ENCODE measurements at regions of chr5 and their contacts with region 1.

Region 1: DNA sequence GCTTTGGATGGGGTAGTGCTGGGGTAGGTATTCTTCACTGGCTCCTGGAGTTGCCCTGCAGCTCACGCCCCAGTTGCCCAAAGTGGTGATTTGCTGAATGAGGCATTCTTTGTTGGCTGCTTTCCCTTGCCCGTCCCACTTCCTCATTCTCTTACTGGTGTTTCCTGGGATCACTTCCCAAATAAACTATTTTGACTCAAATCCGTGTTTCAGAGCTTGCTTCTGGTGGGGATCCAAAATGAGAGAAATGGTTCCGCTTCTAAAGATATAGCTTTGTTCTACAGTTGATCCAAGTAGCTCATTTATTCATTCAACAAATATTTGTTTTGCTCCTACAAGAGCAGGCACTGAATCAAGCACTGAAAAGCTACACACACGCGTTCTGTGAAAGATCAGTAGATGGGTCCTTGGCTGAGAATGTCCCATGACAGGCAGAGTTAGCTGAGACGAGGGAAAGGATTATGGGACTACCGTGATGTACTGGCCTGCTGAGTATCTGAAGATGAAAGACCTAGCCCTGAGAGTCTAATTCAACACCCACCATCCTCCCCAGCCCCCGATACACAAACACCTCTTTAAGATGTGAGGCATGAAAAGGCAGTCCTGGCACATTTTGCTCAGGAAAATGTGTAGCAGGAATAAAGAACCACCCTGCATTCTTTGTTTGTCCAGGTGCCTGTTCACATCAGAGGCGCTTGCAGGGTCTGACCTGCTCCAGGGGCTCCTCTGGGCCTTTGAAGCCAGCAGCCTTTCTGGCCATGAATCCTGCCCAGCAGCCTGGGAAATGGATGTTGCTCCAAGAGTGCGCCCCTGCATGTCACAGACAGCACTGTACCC is 143.1 kb upstream of the RANBP3L start:
- DNase-seq: peak in 35 of 42 donors; percentile 17 to 81 (median 49)

Region 2: DNA sequence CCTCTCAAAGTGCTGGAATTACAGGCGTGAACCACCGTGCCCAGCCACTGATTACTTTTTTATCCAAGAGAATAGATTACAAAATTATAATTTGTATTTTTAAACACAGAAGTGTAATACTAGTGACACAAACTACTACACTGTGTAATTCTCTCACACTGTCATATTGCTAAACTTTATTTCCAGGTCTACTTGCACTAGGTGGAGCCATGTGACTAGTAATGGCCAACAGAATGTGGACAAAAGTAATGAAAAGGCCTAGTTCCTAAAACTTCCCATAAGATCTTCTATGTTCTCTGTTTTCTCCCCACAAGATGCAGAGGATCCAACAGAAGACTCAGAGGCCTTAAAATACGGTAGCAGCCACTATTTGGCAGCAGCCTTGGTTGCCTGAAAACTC is 230.4 kb before region 1 on chr5:
- intact Hi-C with region 1: no loop called
- DNase-seq: no peak

Region 3: DNA sequence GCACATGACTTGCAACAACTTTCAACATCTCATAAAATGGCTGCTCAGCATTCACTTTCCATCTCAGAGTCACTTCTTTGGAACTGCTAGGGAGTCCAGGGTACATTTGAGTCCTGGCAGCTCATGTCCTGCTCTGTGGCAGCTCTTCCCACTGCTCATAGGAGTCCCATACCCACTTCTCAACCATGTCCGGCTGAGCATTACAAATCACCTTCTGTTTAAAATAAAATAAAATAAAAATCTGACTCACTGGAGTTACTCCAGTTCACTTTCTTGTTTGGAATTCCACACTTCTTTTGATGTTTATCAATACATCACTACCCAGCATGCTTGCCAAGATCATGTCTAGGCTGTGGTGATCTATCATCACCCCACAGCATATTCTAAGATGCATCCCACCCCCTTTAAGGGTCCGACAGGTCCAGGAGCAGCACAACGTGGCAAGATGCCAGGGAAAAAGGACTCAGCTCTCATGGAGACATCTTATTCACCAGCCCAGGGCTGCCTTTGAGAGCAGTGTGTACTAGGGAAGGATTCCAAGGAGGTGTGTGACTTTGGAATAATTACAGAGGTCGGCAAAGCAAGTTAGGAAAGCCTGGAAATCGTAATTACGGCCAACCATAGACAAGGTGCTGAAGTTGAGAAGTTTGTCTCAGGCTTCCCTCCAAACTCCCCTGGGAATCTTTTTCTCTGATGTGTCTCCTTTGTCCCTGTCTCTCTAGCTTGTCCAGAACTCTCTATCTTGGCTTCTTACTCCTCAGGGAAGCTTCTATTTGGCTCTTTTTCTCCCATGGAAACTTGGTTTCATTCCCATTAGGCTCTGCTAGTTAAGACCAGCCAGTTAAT is 50.2 kb after region 1 on chr5:
- intact Hi-C with region 1: loop called (anchors 10 kb)
- DNase-seq: peak in 10 of 42 donors; percentile 5 to 61 (median 26)

Measured in head of caudate nucleus (tissue), 42 donors.